Activated T-helper 2 cell treated with anti-CD3 and anti-CD28 coated beads, Interferon-gamma antibody, Interleukin-2, Interleukin-4, amounts not matched to agents 10 μg/mL and 5 μg/mL and 100 μg/mL, durations not matched to agents 14 hours and 24 hours and 36 hours (primary cell): ENCODE measurements at regions of chr18 and their contacts with region 1.

Region 1: DNA sequence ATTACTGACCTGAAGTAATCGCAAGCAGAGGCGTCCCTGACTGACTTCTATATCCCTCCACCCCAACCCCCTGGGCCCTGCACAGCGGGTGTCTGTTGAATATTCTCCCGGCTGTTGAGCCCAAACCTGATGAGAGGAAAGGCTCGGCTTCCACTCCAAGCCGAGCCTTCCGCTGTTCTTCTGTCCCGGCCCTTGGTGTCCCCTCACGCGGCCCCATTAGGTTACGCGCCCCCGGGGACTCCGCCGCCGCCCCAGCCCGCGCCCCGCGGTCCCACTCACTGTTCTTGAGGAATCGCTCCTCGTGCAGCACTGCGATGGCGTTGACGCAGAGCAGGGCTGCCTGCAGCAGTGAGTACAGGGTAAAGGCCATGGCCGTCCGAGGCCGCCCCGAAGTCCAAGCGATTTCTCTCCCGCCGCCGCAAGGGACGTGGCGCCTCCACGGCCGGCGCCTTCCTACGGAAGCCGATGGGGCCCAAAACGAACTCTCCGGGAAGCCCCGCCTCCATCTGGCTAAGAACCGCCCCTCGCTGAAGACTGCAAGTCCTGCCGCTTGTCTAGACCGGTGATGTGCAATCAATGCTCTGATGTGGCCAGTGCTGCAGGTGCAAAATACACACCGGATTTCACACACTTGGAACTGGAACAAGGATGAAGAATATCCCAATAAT is at the start of gene IER3IP1:
- DNase-seq: peak; percentile 83
- H3K4me3 Mint-ChIP-seq: no peak within 1 kb of the TSS
- H3K27ac Mint-ChIP-seq: peak within 1 kb of the TSS; percentile 71
- H3K4me1 Mint-ChIP-seq: no peaks in the 10 kb centered on the region
- H3K27me3 Mint-ChIP-seq: no peaks in the 10 kb centered on the region
- total RNA-seq, gene IER3IP1: 13.3 and 14.2 TPM in 2 replicates

Region 2: DNA sequence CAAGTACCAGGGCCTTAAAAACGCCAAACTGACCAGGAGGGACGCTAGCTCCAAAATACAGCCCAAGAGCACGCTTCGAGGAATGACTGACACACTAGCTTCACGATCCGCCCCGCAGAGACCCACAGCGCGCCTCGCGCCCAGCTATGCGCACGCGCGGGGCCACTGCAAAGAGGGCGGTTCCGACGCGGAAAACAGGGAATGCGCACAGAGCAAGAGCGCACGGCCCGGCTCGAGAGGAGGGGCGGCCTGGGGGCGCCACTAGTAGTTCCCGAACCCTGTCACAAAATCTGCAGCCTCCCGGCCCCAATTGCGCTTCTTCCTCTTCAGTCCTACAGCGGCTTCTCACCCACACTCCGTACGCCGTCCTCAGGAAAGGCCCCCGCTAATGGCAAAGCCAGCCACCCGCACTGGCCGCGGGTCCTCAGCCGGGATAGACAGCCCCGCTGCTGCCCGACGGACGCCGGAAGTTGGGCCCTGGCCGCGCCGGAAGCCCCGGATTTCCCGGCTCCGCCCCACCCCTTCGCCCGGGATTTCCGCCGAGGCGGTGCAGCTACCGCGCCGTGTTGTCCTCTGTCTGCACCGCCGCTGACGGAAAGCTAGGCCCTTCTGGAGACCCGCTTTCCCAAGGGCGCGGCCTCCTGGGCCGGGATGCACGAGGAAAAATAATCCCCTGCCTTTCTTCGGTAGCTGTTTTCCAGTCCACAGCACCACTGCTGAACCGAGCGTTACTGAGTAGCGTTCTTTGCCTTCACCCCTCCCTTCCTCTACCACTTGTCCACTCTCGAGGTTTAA is 25.8 kb before region 1 on chr18 and contains the start of gene HDHD2:
- intact Hi-C with region 1: loop called (anchors 1 kb)
- DNase-seq: peak; percentile 66
- H3K4me3 Mint-ChIP-seq: peak within 1 kb of the TSS; percentile 95
- H3K27ac Mint-ChIP-seq: peak within 1 kb of the TSS; percentile 92
- H3K4me1 Mint-ChIP-seq: peaks cover 26% of the 10 kb centered on the region
- H3K27me3 Mint-ChIP-seq: no peaks in the 10 kb centered on the region
- total RNA-seq, gene HDHD2: 39.3 and 40.8 TPM in 2 replicates

Region 3: DNA sequence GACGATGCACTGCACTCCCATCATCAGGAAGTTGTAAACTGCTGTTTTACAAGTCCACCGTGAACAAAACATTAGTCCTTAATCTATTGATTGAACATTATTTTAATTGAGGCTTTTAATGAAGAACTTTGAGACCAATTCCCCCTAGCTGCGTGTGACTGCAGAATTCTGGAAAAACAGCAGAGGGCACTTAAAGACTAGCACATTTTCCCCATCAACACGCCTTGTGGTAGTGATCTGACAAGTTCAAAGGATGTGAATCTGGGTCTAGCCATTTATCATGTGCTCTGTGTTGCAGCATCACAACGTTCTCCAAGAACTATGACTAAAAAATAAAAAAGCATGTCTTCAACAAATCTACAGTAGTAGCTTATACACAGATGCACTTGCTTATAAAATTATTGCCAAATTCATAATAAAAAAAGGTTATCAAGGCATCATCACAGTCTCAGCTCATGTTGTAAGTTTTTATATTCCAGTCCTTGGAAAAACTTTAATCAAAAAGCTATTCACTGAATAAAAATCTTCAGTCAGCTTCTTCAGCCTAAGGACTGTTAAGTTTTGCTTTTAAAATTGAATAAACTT is 39.6 kb after region 1 on chr18:
- intact Hi-C with region 1: no loop called
- DNase-seq: no peak
- H3K4me3 Mint-ChIP-seq: no peak overlapping the region
- H3K27ac Mint-ChIP-seq: no peak overlapping the region
- H3K4me1 Mint-ChIP-seq: no peaks in the 10 kb centered on the region
- H3K27me3 Mint-ChIP-seq: peaks cover 50% of the 10 kb centered on the region